GM12878 (cell line): ENCODE measurements at regions of chr7 and their contacts with region 1.

Region 1: GRCh38 chr7:105298439-105298907 is 90.2 kb downstream of the SRPK2 start:
- DNase-seq: no peak
- ATAC-seq: peak; percentile 97
- H3K4me3 ChIP-seq: no peak overlapping the region
- H3K27ac ChIP-seq: peak overlapping the region; percentile 66
- H3K4me1 ChIP-seq: peaks cover 15% of the 10 kb centered on the region
- H3K27me3 ChIP-seq: no peaks in the 10 kb centered on the region
- CTCF ChIP-seq: no peak
- EP300 ChIP-seq: no peak
- POLR2A ChIP-seq: no peak
- RAD21 ChIP-seq: no peak

Region 2: DNA sequence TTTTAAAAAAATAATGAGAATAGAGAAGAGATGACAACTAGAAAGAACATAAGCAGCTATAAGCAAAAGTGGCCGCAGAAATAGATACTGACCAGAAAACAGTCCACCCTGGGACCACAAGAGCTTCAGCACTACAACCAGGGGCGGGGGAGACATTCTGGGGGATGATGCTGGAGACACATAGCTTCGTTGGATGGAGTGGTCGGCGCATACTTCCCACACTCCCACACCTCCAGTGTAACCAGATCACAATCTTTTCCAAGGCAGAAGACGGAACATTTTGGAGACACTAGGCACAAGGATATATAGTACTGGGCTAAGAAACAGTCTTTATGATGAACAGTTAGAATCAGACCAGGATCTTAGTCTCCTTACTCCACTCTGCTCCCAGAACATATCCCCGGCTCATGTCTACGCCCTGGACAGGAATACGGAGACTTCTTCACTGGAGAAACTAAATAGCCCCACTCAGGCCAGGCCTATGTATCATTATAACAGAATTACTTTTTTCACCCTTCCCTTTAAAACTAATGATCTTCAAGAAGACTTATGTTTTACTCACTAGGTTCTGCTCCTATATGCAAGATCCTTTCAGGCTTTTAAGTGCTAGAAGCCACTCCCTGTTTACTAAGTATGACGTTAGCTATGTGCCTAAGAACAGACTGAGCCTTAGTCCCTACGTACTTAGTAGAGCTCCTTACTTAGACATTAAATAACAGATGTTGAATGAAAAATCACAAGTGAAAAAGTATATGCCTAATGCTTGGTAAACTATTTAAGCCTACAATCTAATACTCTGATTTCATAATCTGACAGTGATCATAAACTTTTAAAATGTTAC is 79.3 kb before region 1 on chr7:
- CTCF ChIA-PET with region 1: no interaction called
- POLR2A ChIA-PET with region 1: no interaction called
- RAD21 ChIA-PET with region 1: no interaction called
- SMC1A ChIA-PET with region 1: no interaction called
- in situ Hi-C with region 1: no loop called
- intact Hi-C with region 1: no loop called
- DNase-seq: no peak
- ATAC-seq: no peak
- H3K4me3 ChIP-seq: no peak overlapping the region
- H3K27ac ChIP-seq: no peak overlapping the region
- H3K4me1 ChIP-seq: no peaks in the 10 kb centered on the region
- H3K27me3 ChIP-seq: no peaks in the 10 kb centered on the region
- CTCF ChIP-seq: no peak
- EP300 ChIP-seq: no peak
- POLR2A ChIP-seq: no peak
- RAD21 ChIP-seq: no peak

Region 3: GRCh38 chr7:105278973-105279687 is 19.3 kb before region 1 on chr7:
- CTCF ChIA-PET with region 1: interaction called, 13 read pairs
- POLR2A ChIA-PET with region 1: interaction called, 4 read pairs
- RAD21 ChIA-PET with region 1: interaction called, 9 read pairs
- SMC1A ChIA-PET with region 1: interaction called, 25 read pairs
- in situ Hi-C with region 1: no loop called
- intact Hi-C with region 1: no loop called
- DNase-seq: no peak
- ATAC-seq: peak; percentile 80
- H3K4me3 ChIP-seq: no peak overlapping the region
- H3K27ac ChIP-seq: peak overlapping the region; percentile 4; the same call in 1 of the 2 replicates
- H3K4me1 ChIP-seq: no peaks in the 10 kb centered on the region
- H3K27me3 ChIP-seq: no peaks in the 10 kb centered on the region
- CTCF ChIP-seq: no peak
- EP300 ChIP-seq: 0 out of 4 replicates have a peak, but pooled peaks have one; percentile 16 to 32
- POLR2A ChIP-seq: no peak
- RAD21 ChIP-seq: no peak

Region 4: DNA sequence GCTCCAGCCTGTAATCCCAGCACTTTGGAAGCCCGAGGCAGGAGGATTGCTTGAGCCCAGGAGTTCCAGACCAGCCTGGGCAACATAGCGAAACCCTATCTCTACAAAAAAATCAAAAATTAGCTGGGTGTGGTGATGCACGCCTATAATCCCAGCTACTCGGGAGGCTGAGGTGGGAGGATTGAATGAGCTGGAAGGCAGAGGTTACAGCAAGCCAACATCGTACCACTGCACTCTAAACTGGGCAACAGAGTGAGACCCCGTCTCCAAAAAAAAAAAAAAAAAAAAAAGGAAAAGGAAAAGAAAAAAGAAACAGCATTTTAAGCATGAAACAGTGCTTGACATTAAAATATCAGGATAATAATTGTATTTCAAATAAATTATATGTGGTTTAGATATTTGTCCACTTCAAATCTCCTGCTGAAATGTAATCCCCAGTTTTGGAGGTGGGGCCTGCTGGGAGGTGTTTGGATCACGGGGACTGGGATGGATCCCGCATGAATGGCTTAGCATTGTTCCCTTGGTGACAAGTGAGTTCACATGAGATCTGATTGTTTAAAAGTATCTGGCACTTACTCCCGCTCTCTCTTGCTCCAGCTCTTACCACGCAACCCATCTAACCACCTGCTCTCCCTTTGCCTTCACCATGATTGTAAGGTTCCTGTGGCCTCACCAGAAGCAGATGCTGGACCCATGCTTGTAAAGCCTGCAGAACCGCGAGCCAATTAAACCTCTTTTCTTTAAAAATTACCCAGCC is 13.2 kb before region 1 on chr7:
- CTCF ChIA-PET with region 1: interaction called, 13 read pairs
- POLR2A ChIA-PET with region 1: interaction called, 4 read pairs
- RAD21 ChIA-PET with region 1: interaction called, 9 read pairs
- SMC1A ChIA-PET with region 1: interaction called, 25 read pairs
- in situ Hi-C with region 1: no loop called
- intact Hi-C with region 1: no loop called
- DNase-seq: no peak
- ATAC-seq: no peak
- H3K4me3 ChIP-seq: no peak overlapping the region
- H3K27ac ChIP-seq: no peak overlapping the region
- H3K4me1 ChIP-seq: no peaks in the 10 kb centered on the region
- H3K27me3 ChIP-seq: no peaks in the 10 kb centered on the region
- CTCF ChIP-seq: no peak
- EP300 ChIP-seq: no peak
- POLR2A ChIP-seq: no peak
- RAD21 ChIP-seq: no peak

Region 5: GRCh38 chr7:105309235-105310169 is 11.0 kb after region 1 on chr7:
- CTCF ChIA-PET with region 1: interaction called, 20 read pairs
- POLR2A ChIA-PET with region 1: interaction called, 7 read pairs
- RAD21 ChIA-PET with region 1: interaction called, 29 read pairs
- SMC1A ChIA-PET with region 1: interaction called, 18 read pairs
- in situ Hi-C with region 1: no loop called
- intact Hi-C with region 1: no loop called
- DNase-seq: no peak
- ATAC-seq: peak; percentile 75
- H3K4me3 ChIP-seq: no peak overlapping the region
- H3K27ac ChIP-seq: no peak overlapping the region
- H3K4me1 ChIP-seq: peaks cover 28% of the 10 kb centered on the region
- H3K27me3 ChIP-seq: no peaks in the 10 kb centered on the region
- CTCF ChIP-seq: no peak; a peak in 1 of 6 replicates
- EP300 ChIP-seq: no peak
- POLR2A ChIP-seq: no peak
- RAD21 ChIP-seq: no peak